H1 (cell line): ENCODE measurements at regions of chr5 and their contacts with region 1.

Region 1: GRCh38 chr5:112976432-112977309 is at the start of gene DCP2:
- DNase-seq: peak; percentile 94 to 96
- H3K4me3 ChIP-seq: peak within 1 kb of the TSS; percentile 54 to 97 (median 91)
- H3K27ac ChIP-seq: peak within 1 kb of the TSS; percentile 93
- H3K4me1 ChIP-seq: peaks cover 0 to 6% (median 2%) of the 10 kb centered on the region in 4 experiments; a peak in 3 of 7 replicates
- H3K27me3 ChIP-seq: no peaks in the 10 kb centered on the region
- CTCF ChIP-seq: peak in 1 of 3 experiments; percentile 2; a peak in 1 of 4 replicates
- EP300 ChIP-seq: no peak
- POLR2A ChIP-seq: peak; percentile 68 to 98
- RAD21 ChIP-seq: no peak
- total RNA-seq, gene DCP2: 162 and 173 TPM in 2 replicates

Region 2: DNA sequence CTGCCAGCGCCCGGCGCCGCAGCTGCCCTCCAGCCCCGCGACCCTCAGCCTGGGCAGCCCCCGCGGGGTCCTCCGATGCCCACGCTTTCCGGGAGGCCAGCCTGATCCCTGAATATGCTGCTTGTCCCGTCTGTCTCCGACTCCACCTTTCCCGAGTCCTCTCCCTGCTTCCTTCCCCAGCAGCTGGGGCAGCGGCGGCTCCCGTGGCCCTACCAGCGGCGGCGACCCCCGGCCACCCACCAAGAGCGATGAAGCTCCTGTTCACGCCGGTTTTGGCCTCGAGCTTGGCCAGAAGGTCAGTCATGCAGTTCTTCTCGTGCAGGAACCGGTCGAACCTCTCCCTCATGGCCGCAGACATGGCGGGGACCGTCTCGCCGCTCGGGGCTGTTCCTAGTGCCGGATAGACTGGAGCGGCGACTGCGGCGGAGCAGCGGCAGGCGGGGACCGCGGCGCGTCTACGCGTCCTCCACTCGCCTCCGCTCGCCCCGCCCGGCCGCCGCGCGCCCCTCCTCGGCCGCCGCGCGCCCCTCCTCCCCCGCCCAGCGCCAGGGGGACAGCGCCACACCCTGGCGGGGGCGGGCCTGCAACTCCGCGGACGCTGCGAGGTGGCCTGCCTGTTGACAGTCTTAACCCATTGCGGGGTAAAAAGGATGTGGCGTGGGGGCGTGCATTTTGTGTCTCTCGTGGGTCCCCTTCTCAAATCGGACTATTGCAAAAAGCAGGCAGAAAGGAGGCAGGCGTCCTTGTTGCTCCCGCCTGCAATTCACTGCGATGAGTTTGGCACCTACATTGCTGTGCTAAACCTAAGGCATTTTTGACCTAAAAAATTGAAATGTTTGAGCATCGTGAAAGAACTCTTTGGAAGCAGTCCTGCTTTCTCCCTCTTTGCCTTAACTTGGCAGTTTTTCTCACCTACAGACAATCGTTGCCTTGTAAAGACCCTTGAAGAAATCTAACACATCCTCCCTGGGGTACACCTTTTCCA is 54.5 kb before region 1 on chr5 and contains the start of gene REEP5:
- CTCF ChIA-PET with region 1: interaction called, 11 read pairs
- POLR2A ChIA-PET with region 1: interaction called, 14 read pairs
- DNase-seq: peak in 1 of 2 experiments; percentile 87
- H3K4me3 ChIP-seq: peak within 1 kb of the TSS; percentile 73 to 94 (median 89)
- H3K27ac ChIP-seq: peak within 1 kb of the TSS; percentile 43; the same call in 1 of the 2 replicates
- H3K4me1 ChIP-seq: no peaks in the 10 kb centered on the region
- H3K27me3 ChIP-seq: peaks cover 0 to 2% (median 0%) of the 10 kb centered on the region in 4 experiments; a peak in 2 of 7 replicates
- CTCF ChIP-seq: peak; percentile 80 to 90 (median 87)
- EP300 ChIP-seq: peak in 1 of 2 experiments; percentile 67; a peak in 1 of 3 replicates
- POLR2A ChIP-seq: peak; percentile 20 to 84
- RAD21 ChIP-seq: peak; percentile 51 to 75
- total RNA-seq, gene REEP5: 56.6 and 58.3 TPM in 2 replicates

Region 3: GRCh38 chr5:112960315-112960714 is 16.4 kb before region 1 on chr5:
- CTCF ChIA-PET with region 1: interaction called, 18 read pairs
- POLR2A ChIA-PET with region 1: interaction called, 19 read pairs
- DNase-seq: no peak
- H3K4me3 ChIP-seq: no peak overlapping the region
- H3K27ac ChIP-seq: no peak overlapping the region
- H3K4me1 ChIP-seq: peaks cover 0 to 6% (median 0%) of the 10 kb centered on the region in 4 experiments; a peak in 2 of 7 replicates
- H3K27me3 ChIP-seq: no peaks in the 10 kb centered on the region
- CTCF ChIP-seq: no peak
- EP300 ChIP-seq: no peak
- POLR2A ChIP-seq: no peak
- RAD21 ChIP-seq: no peak